Lower leg skin (tissue), 4 donors: ENCODE measurements at regions of chr16 and their contacts with region 1.

Region 1: GRCh38 chr16:19086322-19087199 is 19.1 kb downstream of the COQ7 start:
- DNase-seq: peak; percentile 74 to 96
- H3K4me3 ChIP-seq: no peak overlapping the region
- CTCF ChIP-seq: peak in 1 of 3 donors; percentile 75
- POLR2A ChIP-seq: no peak

Region 2: DNA sequence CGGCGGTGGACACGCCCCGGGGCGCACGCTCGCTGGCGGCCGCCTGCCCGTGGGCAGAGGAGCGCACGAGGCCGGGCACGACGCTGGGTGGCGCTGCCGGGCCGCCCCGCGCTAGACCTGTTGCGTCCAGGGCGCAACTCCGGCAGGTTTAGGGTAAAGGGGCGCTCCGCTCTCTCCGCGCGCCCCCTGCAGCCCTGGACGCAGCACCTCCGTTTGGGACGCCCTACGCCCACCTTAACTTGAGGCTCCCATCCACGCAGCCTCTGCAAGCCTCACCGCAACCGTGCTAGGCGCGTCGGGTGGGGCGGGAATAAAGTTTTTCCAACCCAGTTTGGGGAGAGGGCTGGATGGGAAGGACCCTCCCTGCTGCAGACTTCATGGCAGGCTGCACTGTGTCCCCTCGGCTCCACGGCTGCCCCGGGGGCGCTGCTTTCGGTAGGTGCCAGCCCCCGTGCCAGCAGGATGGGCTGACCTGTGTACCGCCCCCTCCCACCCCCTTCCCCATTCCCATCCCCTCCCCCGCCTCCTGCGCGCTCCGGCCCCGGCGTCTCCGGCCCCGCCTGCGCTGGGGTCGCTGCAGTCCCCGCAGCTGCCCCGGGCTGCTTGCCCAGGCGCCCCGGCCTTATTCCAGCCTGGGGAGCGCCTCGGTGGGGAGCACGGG is 81.3 kb after region 1 on chr16 and contains the start of gene SYT17:
- intact Hi-C with region 1: loop called (anchors 5 kb)
- DNase-seq: peak in 1 of 2 donors; percentile 91
- H3K4me3 ChIP-seq: peak within 1 kb of the TSS; percentile 8
- CTCF ChIP-seq: no peak
- POLR2A ChIP-seq: no peak
- total RNA-seq, gene SYT17: 3.7 to 9.0 (median 4.8) TPM

Region 3: DNA sequence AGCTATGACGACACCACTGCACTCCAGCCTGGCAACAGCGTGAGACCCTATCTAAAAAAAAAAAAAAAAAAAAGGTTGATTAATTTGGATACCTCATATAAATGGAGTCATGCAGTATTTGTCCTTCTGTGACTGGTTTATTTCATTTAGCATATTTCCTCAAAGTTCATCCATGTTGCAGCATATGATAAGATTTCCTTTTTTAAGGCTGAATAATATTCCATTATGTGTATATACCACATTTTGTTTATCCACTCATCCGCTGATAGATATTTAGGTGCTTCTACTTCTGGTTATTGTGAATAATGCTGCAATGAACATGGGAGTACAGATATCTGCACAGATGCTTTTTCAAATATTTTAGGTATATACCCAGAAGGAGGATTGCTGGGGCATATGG is 287.8 kb after region 1 on chr16:
- intact Hi-C with region 1: loop called (anchors 1 kb)
- DNase-seq: no peak
- H3K4me3 ChIP-seq: no peak overlapping the region
- CTCF ChIP-seq: no peak
- POLR2A ChIP-seq: no peak